ENCODE measurements at regions of chr17 and their contacts with region 1.

Region 1: GRCh38 chr17:3959295-3959925 is 4.8 kb downstream of the ATP2A3 start:
- DNase-seq: no peak
- H3K4me3 ChIP-seq: no peak overlapping the region
- H3K27me3 ChIP-seq: peaks cover 18% of the 10 kb centered on the region
- CTCF ChIP-seq: no peak

Region 2: GRCh38 chr17:3944485-3945388 is 14.7 kb before region 1 on chr17:
- CTCF ChIA-PET with region 1: interaction called, 10 read pairs
- POLR2A ChIA-PET with region 1: no interaction called
- DNase-seq: no peak
- H3K4me3 ChIP-seq: peak overlapping the region; percentile 65
- H3K27me3 ChIP-seq: no peaks in the 10 kb centered on the region
- CTCF ChIP-seq: no peak

Measured in BJ (cell line).